Activated CD4-positive, alpha-beta T cell treated with anti-CD3 and anti-CD28 coated beads for 36 hours (primary cell): ENCODE measurements at regions of chr16 and their contacts with region 1.

Region 1: GRCh38 chr16:48623304-48624016 is 13.5 kb upstream of the N4BP1 start:
- DNase-seq: peak; percentile 90
- ATAC-seq: peak; percentile 97
- H3K4me3 Mint-ChIP-seq: peak overlapping the region; percentile 68
- H3K27ac Mint-ChIP-seq: peak overlapping the region; percentile 77
- H3K4me1 Mint-ChIP-seq: peaks cover 19% of the 10 kb centered on the region
- H3K27me3 Mint-ChIP-seq: no peaks in the 10 kb centered on the region

Region 2: DNA sequence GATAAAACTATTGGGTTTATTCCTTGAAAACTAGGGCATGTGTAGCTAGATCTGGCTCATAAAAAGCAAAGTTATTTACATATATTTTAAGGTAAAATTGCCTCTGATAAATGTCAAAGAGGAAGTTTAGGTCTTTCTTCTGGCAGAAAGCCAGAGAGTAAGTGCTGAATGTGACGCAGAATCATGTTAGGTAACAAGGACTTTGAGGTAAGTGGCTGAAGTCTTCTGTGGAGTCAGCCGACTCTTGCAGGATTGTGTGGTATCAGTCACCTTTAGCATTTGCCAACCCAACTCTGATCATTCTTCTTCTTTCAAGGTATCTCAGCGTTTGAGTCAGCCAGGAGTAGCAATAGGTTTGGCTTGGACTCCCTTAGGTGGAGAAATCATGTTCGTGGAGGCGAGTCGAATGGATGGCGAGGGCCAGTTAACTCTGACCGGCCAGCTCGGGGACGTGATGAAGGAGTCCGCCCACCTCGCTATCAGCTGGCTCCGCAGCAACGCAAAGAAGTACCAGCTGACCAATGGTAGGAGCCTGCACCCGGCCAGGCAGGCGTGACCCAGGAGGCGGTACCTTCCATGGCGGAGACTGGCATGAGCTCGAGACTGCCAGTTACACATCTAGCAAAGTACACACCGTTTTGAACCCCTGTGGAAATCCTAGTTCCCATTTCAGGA is 276.1 kb before region 1 on chr16:
- CTCF ChIA-PET with region 1: interaction called, 72 read pairs
- POLR2A ChIA-PET with region 1: no interaction called
- intact Hi-C with region 1: no loop called
- DNase-seq: no peak
- ATAC-seq: peak; percentile 40
- H3K4me3 Mint-ChIP-seq: no peak overlapping the region
- H3K27ac Mint-ChIP-seq: no peak overlapping the region
- H3K4me1 Mint-ChIP-seq: peaks cover 10% of the 10 kb centered on the region
- H3K27me3 Mint-ChIP-seq: no peaks in the 10 kb centered on the region

Region 3: DNA sequence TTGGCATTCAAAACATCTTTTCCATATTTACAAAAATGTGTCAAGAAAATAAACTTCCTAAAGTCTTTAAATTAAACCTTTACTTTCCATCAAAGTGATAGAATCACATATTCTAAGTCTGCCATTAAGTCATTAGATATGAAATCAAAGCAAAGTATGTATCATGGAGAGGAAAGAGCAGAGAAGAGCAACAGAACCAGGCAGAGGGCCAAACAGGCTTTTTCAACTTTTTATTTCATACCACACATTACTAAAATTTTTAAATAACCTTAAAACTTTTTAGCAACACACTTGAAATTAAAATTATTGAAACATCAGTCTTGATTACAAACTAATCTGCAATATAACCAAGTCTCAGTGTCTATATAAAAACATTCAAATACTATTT is 252.1 kb before region 1 on chr16:
- CTCF ChIA-PET with region 1: interaction called, 25 read pairs
- POLR2A ChIA-PET with region 1: no interaction called
- intact Hi-C with region 1: loop called in 1 of 2 experiments (anchors 5 kb)
- DNase-seq: no peak
- ATAC-seq: no peak
- H3K4me3 Mint-ChIP-seq: no peak overlapping the region
- H3K27ac Mint-ChIP-seq: no peak overlapping the region
- H3K4me1 Mint-ChIP-seq: peaks cover 35% of the 10 kb centered on the region
- H3K27me3 Mint-ChIP-seq: no peaks in the 10 kb centered on the region

Region 4: DNA sequence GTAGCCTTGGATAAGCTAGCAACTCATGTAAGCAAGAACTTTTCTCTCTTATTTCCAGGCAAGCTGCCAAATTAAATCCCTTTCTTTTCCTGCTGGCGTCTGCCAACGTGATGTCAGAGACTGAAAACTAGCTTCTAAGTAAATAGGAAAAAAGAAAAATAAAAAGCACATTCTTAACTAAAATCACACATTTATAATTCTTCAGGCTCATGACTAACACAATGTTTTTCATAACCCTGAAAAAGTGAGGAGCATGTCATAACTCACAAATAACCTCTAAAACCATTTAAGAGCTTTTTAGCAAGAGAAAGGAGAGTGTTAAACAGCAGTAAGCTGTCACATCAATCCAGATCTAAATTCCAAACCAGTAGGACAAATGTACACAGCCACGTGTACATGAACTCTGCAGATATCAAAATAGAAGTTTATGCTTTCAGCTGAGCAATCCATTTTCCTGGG is 123.5 kb before region 1 on chr16:
- CTCF ChIA-PET with region 1: interaction called, 11 read pairs
- POLR2A ChIA-PET with region 1: no interaction called
- intact Hi-C with region 1: no loop called
- DNase-seq: no peak
- ATAC-seq: no peak
- H3K4me3 Mint-ChIP-seq: no peak overlapping the region
- H3K27ac Mint-ChIP-seq: no peak overlapping the region
- H3K4me1 Mint-ChIP-seq: no peaks in the 10 kb centered on the region
- H3K27me3 Mint-ChIP-seq: no peaks in the 10 kb centered on the region

Region 5: DNA sequence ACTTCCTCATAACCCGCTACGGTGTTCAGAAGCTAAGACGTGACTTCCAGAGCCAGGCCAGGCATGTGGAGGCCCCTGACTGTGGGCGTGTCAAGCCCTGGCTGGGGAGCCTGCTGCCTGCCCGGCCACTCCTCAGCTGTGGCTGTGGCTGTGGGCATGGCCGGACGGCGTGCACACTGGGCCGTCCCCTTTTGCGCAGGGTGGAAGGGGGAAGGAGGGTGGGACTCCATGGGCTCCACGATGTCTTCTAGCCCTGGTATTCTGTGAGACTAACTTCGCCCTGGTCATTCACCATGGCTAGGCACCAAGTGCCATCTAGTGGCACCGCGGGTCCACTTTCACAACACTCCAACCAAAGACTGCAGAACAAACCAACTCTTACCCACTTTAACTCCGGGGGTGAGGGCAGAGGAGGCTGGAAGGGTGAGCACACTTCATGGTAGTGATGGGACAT is 81.4 kb before region 1 on chr16:
- CTCF ChIA-PET with region 1: interaction called, 23 read pairs
- POLR2A ChIA-PET with region 1: no interaction called
- intact Hi-C with region 1: loop called in 1 of 2 experiments (anchors 5 kb)
- DNase-seq: peak; percentile 47
- ATAC-seq: peak; percentile 56
- H3K4me3 Mint-ChIP-seq: no peak overlapping the region
- H3K27ac Mint-ChIP-seq: no peak overlapping the region
- H3K4me1 Mint-ChIP-seq: peaks cover 10% of the 10 kb centered on the region
- H3K27me3 Mint-ChIP-seq: no peaks in the 10 kb centered on the region

Region 6: DNA sequence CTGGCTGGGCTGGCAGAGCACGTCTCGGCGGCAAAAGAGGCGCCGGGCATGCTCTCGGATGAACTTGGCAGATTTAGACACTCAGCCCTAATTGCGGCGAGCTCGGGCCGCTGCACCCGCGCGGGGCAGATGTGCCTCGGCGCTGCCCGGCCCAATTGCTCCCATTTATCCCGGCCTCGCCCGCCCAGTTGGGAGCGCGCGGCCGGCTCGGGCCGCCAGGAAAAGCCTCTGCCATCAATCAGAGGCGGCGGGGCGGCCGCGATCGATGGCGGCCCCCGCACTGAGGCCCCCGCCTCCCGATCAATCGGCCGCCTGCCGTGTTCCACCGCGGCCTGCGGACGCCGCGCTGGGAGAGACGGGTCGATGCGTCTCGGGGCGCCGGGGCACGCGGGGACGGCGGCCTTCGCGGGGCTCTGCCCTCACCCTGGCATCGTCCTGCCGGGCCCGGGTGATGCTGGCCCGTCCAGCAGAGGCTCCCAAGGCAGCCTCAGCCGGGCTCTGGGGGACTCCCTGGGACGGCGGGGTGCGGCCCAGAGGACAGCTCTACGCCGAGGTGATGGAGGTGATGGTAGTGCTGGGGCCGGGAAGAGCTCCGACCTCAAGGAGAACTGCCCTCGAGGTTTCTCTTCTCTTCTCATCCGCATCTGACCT is 187.5 kb after region 1 on chr16:
- CTCF ChIA-PET with region 1: no interaction called
- POLR2A ChIA-PET with region 1: no interaction called
- intact Hi-C with region 1: no loop called
- DNase-seq: no peak
- ATAC-seq: no peak
- H3K4me3 Mint-ChIP-seq: no peak overlapping the region
- H3K27ac Mint-ChIP-seq: no peak overlapping the region
- H3K4me1 Mint-ChIP-seq: no peaks in the 10 kb centered on the region
- H3K27me3 Mint-ChIP-seq: peaks cover 27% of the 10 kb centered on the region